ENCODE measurements at regions of chr13 and their contacts with region 1.

Region 1: DNA sequence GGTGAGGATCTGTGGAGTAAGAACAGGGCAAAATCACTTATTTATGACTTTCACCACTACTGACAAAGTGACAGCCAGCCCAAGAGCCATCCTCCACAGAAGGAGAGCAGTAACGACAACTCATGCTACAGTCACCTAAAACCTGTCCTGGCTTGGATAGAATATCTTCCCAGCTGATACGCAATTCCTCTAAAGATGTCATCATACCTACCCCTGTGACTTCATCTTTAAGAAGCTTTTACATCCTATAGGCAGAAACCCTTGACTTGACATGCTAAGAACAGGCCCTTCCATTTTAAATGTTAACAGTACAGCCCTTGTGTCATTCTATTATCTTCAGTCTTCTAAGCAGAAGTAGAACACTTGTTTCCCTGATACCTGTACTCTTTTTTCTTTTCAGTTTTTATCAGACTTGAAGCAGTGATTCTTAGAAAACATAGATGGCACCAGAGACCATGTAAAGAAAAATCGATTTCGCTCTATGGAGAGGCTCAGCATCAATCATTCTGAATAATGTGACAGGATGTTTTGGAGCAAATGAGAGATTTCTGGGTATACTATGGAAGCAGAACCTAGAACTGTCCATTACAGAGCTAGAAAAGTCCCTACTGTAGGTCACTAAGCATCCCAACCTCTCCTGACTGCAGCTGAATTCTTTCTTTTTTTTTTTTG is 20.1 kb downstream of the STOML3 start:
- DNase-seq: peak in 2 of 9 experiments; percentile 3 to 13
- ATAC-seq: no peak
- H3K4me3 ChIP-seq: no peak overlapping the region
- H3K4me3 Mint-ChIP-seq: no peak overlapping the region
- H3K27ac ChIP-seq: no peak overlapping the region
- H3K27ac Mint-ChIP-seq: no peak overlapping the region
- H3K4me1 ChIP-seq: no peaks in the 10 kb centered on the region
- H3K4me1 Mint-ChIP-seq: no peaks in the 10 kb centered on the region
- H3K27me3 ChIP-seq: no peaks in the 10 kb centered on the region
- H3K27me3 Mint-ChIP-seq: peaks cover 4% of the 10 kb centered on the region
- CTCF ChIP-seq: no peak

Region 2: DNA sequence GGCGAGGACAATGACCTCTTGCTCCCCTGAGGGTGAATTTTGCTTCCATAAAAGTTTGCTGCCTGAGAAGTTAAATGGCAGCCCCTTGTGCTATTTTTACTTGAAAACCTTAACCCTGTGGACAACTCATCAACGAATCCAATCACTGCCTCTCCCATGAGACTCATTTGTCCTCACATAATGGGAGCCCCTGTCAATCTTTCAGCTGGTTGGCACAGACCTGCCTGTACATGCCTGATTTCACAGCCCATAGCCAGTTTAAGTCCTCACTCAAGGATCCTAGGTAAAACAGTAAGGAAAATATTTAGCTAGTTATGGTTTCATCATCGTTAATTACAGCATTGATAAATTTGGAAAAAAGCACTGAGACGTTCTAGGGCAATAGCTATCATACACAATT is 275.2 kb after region 1 on chr13:
- CTCF ChIA-PET with region 1: no interaction called
- POLR2A ChIA-PET with region 1: no interaction called
- intact Hi-C with region 1: no loop called
- DNase-seq: no peak
- ATAC-seq: no peak
- H3K4me3 ChIP-seq: no peak overlapping the region
- H3K4me3 Mint-ChIP-seq: no peak overlapping the region
- H3K27ac ChIP-seq: no peak overlapping the region
- H3K27ac Mint-ChIP-seq: no peak overlapping the region
- H3K4me1 ChIP-seq: no peaks in the 10 kb centered on the region
- H3K4me1 Mint-ChIP-seq: no peaks in the 10 kb centered on the region
- H3K27me3 ChIP-seq: peaks cover 0 to 2% of the 10 kb centered on the region in 2 experiments
- H3K27me3 Mint-ChIP-seq: peaks cover 28% of the 10 kb centered on the region
- CTCF ChIP-seq: no peak

Region 3: GRCh38 chr13:39364947-39365484 is 394.5 kb after region 1 on chr13:
- CTCF ChIA-PET with region 1: no interaction called
- POLR2A ChIA-PET with region 1: no interaction called
- intact Hi-C with region 1: loop called in 1 of 2 experiments (anchors 10 kb)
- DNase-seq: no peak
- ATAC-seq: no peak
- H3K4me3 ChIP-seq: no peak overlapping the region
- H3K4me3 Mint-ChIP-seq: no peak overlapping the region
- H3K27ac ChIP-seq: no peak overlapping the region
- H3K27ac Mint-ChIP-seq: no peak overlapping the region
- H3K4me1 ChIP-seq: no peaks in the 10 kb centered on the region
- H3K4me1 Mint-ChIP-seq: no peaks in the 10 kb centered on the region
- H3K27me3 ChIP-seq: peaks cover 0 to 4% of the 10 kb centered on the region in 2 experiments
- H3K27me3 Mint-ChIP-seq: peaks cover 17% of the 10 kb centered on the region
- CTCF ChIP-seq: no peak

Region 4: DNA sequence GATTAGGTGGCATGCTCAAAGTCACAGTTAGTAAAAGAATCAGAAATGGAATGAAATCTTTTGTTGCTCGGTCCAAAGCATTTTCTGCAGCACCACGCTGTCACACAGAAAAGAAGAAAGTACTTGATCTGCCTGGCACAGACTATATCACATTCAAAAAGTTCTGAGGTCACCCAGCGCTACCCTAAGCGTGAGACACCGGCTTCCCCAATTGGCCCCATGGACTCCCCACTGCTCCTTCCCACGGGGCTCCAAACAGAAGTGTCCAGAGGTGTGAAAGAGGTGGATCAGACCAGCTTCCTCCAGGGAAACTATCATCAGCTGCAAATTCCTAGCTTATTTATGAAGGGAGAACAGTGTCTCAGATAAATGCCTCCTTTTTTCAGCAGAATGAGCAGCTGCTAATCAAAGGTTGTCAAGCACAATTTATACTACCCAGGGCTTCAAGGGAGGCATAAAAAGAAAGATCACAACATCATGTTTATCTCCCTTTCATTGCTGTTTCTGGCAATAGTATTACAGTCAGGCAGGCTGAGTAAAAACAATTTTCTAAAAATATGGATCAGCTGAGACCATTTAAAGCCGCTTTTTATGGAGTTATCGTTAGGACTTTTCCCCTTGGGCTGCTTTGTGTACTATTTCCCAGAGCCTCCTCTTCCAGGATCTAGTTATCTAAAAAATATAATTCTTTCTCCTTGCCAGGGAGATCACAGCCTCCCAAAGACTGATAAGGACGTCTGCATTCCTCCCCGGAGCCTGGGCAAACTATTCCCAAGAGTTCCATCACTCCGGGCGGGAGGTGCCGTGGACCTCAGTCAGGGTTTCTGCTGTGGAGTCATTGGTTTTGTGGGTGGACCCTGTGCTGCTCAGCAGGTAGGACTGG is 424.5 kb after region 1 on chr13:
- CTCF ChIA-PET with region 1: no interaction called
- POLR2A ChIA-PET with region 1: no interaction called
- intact Hi-C with region 1: no loop called
- DNase-seq: no peak
- ATAC-seq: no peak
- H3K4me3 ChIP-seq: no peak overlapping the region
- H3K4me3 Mint-ChIP-seq: no peak overlapping the region
- H3K27ac ChIP-seq: no peak overlapping the region
- H3K27ac Mint-ChIP-seq: no peak overlapping the region
- H3K4me1 ChIP-seq: no peaks in the 10 kb centered on the region
- H3K4me1 Mint-ChIP-seq: no peaks in the 10 kb centered on the region
- H3K27me3 ChIP-seq: no peaks in the 10 kb centered on the region
- H3K27me3 Mint-ChIP-seq: peaks cover 3% of the 10 kb centered on the region
- CTCF ChIP-seq: no peak

Measured in CD8-positive, alpha-beta T cell (primary cell).